Activated CD4-positive, alpha-beta T cell treated with anti-CD3 and anti-CD28 coated beads, Interleukin-2, amount 10 ng/mL, durations not matched to agents 7 days and 5 days (primary cell): ENCODE measurements at regions of chrX and their contacts with region 1.

Region 1: GRCh38 chrX:136754651-136755050 is 26.1 kb downstream of the ARHGEF6 start:
- DNase-seq: peak; percentile 46
- H3K4me3 Mint-ChIP-seq: no peak overlapping the region
- H3K27ac Mint-ChIP-seq: peak overlapping the region; percentile 31
- H3K4me1 Mint-ChIP-seq: peaks cover 68% of the 10 kb centered on the region
- H3K27me3 Mint-ChIP-seq: no peaks in the 10 kb centered on the region

Region 2: GRCh38 chrX:136767104-136767941 is 12.7 kb after region 1 on chrX:
- CTCF ChIA-PET with region 1: interaction called, 15 read pairs
- POLR2A ChIA-PET with region 1: no interaction called
- DNase-seq: peak; percentile 55
- H3K4me3 Mint-ChIP-seq: peak overlapping the region; percentile 70
- H3K27ac Mint-ChIP-seq: peak overlapping the region; percentile 85
- H3K4me1 Mint-ChIP-seq: peaks cover 76% of the 10 kb centered on the region
- H3K27me3 Mint-ChIP-seq: no peaks in the 10 kb centered on the region

Region 3: DNA sequence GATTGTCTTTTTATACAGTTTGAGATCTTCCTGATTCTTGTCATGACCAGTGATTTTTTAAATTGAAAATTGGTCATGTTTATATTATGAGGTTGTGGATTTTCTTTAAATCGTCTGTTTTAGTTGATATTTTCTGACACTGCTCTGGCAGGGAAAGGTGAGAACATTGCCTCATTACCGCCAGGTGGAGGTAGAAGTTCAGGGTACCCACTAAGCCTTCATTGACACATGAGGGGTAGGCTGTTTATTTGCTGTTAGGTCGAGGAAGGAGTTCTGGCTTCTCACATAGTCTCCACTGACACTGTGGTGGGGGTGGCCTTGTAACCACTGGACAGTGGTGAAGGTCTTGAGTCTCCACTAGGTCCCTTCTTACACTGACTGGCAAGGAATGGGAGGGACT is 396.8 kb after region 1 on chrX:
- CTCF ChIA-PET with region 1: no interaction called
- POLR2A ChIA-PET with region 1: no interaction called
- DNase-seq: no peak
- H3K4me3 Mint-ChIP-seq: no peak overlapping the region
- H3K27ac Mint-ChIP-seq: no peak overlapping the region
- H3K4me1 Mint-ChIP-seq: no peaks in the 10 kb centered on the region
- H3K27me3 Mint-ChIP-seq: peaks cover 8% of the 10 kb centered on the region